ENCODE measurements at regions of chr9 and their contacts with region 1.

Region 1: DNA sequence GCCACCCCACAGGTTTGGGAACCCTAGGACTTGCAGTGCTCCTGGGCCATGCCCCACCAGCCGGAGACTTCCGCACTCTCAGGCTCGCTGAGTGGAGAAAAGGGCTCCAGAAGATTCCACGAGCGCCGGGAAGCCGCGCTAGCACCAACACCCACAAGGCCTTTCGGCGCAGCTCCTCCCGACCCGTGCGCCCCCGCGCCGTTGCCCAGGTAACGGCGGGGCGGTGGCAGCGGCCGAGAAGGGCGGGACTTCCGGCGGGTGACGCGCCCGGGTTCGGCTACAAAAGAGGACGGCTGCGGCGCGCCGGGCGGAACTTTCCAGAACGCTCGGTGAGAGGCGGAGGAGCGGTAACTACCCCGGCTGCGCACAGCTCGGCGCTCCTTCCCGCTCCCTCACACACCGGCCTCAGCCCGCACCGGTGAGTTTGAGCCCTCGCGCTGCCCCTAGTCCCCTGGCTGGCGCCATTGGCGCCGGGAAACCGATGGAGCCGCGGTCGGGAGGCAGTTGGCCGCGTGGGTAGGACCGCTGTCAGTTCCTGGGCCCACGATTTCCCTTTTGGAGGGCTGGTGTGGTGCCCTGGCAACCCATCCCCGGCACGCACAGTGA is at the start of gene DNAJA1:
- H3K4me3 ChIP-seq: peak within 1 kb of the TSS; percentile 77
- H3K27ac ChIP-seq: peak within 1 kb of the TSS; percentile 94
- H3K4me1 ChIP-seq: no peaks in the 10 kb centered on the region; the same call in 1 of the 2 replicates
- CTCF ChIP-seq: no peak; the same call in 1 of the 2 replicates

Region 2: GRCh38 chr9:32384364-32385151 is 640.5 kb before region 1 on chr9 and contains the start of gene ACO1:
- CTCF ChIA-PET with region 1: no interaction called
- POLR2A ChIA-PET with region 1: interaction called, 10 read pairs
- H3K4me3 ChIP-seq: peak within 1 kb of the TSS; percentile 92
- H3K27ac ChIP-seq: peak within 1 kb of the TSS; percentile 41; the same call in 1 of the 2 replicates
- H3K4me1 ChIP-seq: no peaks in the 10 kb centered on the region
- CTCF ChIP-seq: no peak

Region 3: DNA sequence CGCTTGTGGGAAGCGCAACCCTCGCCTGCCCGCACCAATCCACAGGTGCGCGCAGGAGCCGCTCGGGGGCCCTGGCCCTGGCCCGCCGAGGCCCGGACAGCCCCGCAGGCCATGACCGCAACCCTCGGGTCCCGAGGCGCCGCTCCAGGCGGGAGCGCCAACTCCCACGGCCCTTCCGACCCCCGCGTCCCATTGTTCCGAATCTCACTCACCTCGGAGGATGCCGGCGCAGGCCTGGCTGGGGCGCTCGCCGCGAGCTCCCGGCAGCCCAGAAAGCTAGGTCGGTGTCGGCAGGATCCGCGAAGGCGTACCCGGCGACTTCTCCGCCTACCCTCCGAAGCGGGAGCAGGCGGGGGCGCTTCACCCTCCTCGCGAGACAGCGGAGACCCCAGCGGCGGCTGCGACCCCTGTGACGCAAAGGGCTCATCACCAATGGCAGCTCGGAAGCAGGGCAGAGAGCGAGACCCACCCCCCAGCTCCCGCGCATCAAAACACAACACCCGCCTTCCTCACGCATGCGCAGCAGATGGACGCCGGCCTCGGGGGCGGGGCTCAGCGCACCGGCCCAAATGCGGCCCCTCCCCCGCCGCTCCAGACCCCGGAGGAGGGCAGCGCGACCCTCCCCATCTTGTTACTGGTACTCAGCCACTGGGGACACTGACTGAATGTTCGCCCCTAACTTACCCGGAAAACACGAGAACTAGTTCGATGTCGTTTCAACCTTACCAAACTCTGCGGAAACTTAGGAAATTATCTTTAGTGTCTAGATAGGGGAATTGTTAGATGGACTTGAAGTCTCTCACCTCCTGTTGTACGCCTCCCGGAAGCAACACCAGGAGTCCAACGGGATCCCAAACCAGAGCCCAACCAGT is 474.3 kb before region 1 on chr9:
- CTCF ChIA-PET with region 1: no interaction called
- POLR2A ChIA-PET with region 1: interaction called, 13 read pairs
- H3K4me3 ChIP-seq: peak overlapping the region; percentile 84
- H3K27ac ChIP-seq: peak overlapping the region; percentile 91
- H3K4me1 ChIP-seq: 0 out of 2 replicates have a peak, but pooled peaks cover 4% of the 10 kb centered on the region
- CTCF ChIP-seq: peak; percentile 65; the same call in 1 of the 2 replicates

Region 4: GRCh38 chr9:33007755-33008154 is 17.3 kb before region 1 on chr9:
- CTCF ChIA-PET with region 1: no interaction called
- POLR2A ChIA-PET with region 1: interaction called, 95 read pairs
- H3K4me3 ChIP-seq: no peak overlapping the region
- H3K27ac ChIP-seq: no peak overlapping the region
- H3K4me1 ChIP-seq: no peaks in the 10 kb centered on the region
- CTCF ChIP-seq: no peak

Region 5: DNA sequence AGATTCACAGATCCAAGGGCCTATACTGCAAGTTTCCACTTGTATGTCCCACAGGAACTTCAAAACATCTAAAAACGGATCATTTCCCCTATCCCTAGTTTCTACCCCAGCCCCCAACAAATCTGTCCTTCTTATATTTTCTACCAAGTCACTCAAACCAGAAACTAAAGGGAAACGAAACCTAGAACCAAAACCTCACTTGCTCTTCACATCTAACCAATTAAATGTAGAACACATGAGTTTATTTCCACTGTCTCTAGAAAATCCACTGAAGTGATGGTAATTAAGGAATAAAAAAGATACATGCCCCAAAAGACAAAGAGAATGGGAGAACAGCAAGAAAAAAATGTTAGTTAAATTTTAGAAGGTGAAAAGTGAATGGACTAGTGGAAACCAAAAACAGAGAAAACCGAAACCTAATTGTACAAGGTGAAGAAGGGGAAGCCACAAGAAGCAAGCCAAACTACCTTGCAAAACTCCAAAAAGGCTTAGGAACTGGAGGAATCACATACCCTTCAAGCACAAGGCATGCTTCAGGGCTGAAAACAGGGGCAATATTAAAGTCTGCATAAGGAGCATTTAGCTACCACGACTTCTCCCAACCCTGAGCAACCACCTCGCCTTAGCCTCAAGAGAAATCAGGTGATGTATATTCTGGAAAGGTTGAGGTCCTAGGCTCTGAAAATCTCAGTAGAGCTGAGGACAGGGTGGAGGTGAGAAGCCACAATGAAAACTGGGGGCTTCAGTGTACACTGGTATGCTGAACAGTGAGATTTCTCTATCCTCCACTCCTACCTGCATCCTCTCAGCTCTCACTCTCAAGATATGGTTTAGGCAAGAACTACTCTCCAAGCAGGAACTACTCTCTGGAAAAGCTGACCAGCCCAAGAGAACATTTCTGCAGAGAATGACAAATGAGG is 40.3 kb after region 1 on chr9:
- CTCF ChIA-PET with region 1: interaction called, 3 read pairs
- POLR2A ChIA-PET with region 1: interaction called, 24 read pairs
- H3K4me3 ChIP-seq: no peak overlapping the region
- H3K27ac ChIP-seq: no peak overlapping the region
- H3K4me1 ChIP-seq: no peaks in the 10 kb centered on the region
- CTCF ChIP-seq: no peak

Region 6: DNA sequence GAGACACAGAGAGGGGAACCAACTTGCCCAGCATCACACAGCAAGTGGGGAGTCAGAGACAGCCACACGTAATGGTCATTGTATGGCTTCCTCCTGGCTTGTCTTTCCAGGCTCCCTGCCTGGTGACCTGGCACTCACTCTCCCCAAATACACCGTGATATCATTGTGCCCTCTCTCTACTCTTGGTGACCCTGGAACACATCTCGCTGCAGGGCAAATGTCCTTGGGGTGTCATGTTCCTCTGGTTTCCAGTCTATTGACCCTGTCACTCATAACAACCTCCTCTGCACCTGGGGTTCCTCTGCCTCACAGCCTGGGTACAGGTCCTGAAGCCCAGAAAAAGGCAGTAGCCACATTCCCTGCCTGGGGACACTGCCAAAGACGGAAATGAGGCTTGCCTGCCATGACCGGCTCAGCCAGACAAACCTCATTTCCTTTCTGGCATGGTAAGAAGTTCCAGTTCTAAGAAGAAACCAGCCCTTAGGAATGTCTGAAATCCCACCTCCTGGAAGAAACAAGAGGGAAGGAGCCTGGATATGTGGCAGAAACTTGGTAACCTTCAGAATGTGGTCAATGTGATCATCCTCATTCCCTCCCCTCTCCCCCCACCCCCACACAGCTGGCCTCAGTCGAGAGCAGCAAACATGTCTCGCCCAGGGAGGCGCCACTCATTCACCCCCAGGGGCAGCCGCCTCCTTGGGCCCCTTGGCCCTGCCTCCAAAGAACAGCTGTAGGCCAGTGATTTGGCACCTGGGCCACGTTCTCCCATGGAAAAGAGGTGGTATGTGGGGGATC is 82.0 kb after region 1 on chr9:
- CTCF ChIA-PET with region 1: no interaction called
- POLR2A ChIA-PET with region 1: no interaction called
- H3K4me3 ChIP-seq: no peak overlapping the region
- H3K27ac ChIP-seq: no peak overlapping the region
- H3K4me1 ChIP-seq: no peaks in the 10 kb centered on the region
- CTCF ChIP-seq: no peak

Region 7: GRCh38 chr9:33159760-33160127 is 134.7 kb after region 1 on chr9:
- CTCF ChIA-PET with region 1: no interaction called
- POLR2A ChIA-PET with region 1: interaction called, 30 read pairs
- H3K4me3 ChIP-seq: no peak overlapping the region
- H3K27ac ChIP-seq: no peak overlapping the region
- H3K4me1 ChIP-seq: peaks cover 41% of the 10 kb centered on the region
- CTCF ChIP-seq: no peak

Region 8: GRCh38 chr9:33290247-33291030 is 265.4 kb after region 1 on chr9 and contains the start of gene NFX1:
- CTCF ChIA-PET with region 1: no interaction called
- POLR2A ChIA-PET with region 1: interaction called, 15 read pairs
- H3K4me3 ChIP-seq: peak within 1 kb of the TSS; percentile 84
- H3K27ac ChIP-seq: peak within 1 kb of the TSS; percentile 87
- H3K4me1 ChIP-seq: no peaks in the 10 kb centered on the region
- CTCF ChIP-seq: no peak

Measured in HEK293 (cell line).